ENCODE measurements at regions of chr17 and their contacts with region 1.

Region 1: GRCh38 chr17:67376737-67377487 is at the start of gene PITPNC1:
- DNase-seq: peak; percentile 86 to 94
- ATAC-seq: peak; percentile 72 to 88 (median 83)
- H3K4me3 ChIP-seq: peak within 1 kb of the TSS; percentile 73
- H3K4me3 Mint-ChIP-seq: peak within 1 kb of the TSS; percentile 96
- H3K27ac ChIP-seq: peak within 1 kb of the TSS; percentile 89
- H3K27ac Mint-ChIP-seq: peak within 1 kb of the TSS; percentile 91 to 92
- H3K4me1 ChIP-seq: peaks cover 37% of the 10 kb centered on the region
- H3K4me1 Mint-ChIP-seq: peaks cover 33 to 35% of the 10 kb centered on the region in 2 donors
- H3K27me3 ChIP-seq: no peaks in the 10 kb centered on the region
- H3K27me3 Mint-ChIP-seq: no peaks in the 10 kb centered on the region
- CTCF ChIP-seq: peak; percentile 13
- total RNA-seq, gene PITPNC1: 150 to 185 (median 169) TPM

Region 2: DNA sequence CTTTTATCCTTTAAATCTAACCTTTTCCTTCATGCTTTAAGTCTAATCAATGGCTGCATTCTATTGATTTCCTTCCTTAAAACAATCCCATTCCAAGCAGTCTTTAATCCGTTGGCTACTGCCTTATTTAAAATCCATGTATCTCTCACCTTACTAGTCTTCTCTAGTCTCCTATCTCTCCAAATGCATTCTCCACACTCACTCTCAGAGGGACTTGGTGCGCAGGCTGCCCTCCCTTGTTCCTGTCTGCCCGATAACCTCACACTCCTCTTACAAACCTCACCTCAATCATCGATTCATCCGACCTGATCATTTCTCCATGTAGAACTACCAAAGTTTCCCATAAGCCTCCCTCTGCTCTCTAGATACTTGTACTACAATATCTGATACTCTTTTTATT is 33.7 kb before region 1 on chr17:
- intact Hi-C with region 1: no loop called
- DNase-seq: no peak
- ATAC-seq: no peak
- H3K4me3 ChIP-seq: no peak overlapping the region
- H3K4me3 Mint-ChIP-seq: no peak overlapping the region
- H3K27ac ChIP-seq: no peak overlapping the region
- H3K27ac Mint-ChIP-seq: peak overlapping the region in 1 of 2 donors; percentile 0
- H3K4me1 ChIP-seq: no peaks in the 10 kb centered on the region
- H3K4me1 Mint-ChIP-seq: no peaks in the 10 kb centered on the region
- H3K27me3 ChIP-seq: no peaks in the 10 kb centered on the region
- H3K27me3 Mint-ChIP-seq: no peaks in the 10 kb centered on the region
- CTCF ChIP-seq: no peak

Region 3: DNA sequence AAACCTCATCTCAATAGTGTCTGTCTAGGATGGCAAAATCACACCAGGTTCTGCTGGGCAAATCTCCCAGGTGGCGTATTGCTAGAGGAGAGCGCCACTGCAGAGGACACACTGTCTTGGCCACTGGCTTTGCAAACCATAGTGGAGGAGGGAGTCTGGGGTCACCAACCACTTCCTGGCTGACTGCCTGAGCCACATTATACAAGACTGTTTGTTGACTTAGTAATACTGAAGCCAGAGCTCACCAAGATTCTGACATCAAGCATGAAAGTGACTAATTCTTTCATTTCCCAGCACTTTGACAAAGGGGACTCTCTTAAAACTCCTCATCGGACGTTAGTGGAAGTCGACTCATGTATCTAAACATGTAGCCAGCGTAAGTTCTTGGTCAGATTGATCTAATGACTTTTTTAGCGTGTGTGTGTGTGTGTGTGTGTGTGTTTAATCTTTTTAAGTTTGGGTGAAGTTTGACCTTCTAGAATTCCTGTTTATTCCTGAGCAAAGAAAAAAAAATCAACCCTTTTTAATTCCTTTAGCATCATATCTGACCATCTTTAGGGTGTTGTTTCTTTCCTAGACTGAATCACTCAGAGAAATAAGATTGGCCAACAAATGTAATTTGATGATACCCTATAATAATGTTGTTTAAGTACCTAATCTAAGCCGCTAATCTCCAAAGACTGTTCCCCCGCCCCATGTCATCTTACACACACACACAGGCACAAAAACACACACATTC is 13.9 kb after region 1 on chr17:
- intact Hi-C with region 1: loop called (anchors 2 kb)
- DNase-seq: peak; percentile 75
- ATAC-seq: peak; percentile 77 to 92 (median 88)
- H3K4me3 ChIP-seq: peak overlapping the region; percentile 30
- H3K4me3 Mint-ChIP-seq: peak overlapping the region; percentile 89
- H3K27ac ChIP-seq: peak overlapping the region; percentile 91
- H3K27ac Mint-ChIP-seq: peak overlapping the region; percentile 96 to 99
- H3K4me1 ChIP-seq: peaks cover 82% of the 10 kb centered on the region
- H3K4me1 Mint-ChIP-seq: peaks cover 84 to 87% of the 10 kb centered on the region in 2 donors
- H3K27me3 ChIP-seq: no peaks in the 10 kb centered on the region
- H3K27me3 Mint-ChIP-seq: no peaks in the 10 kb centered on the region
- CTCF ChIP-seq: no peak

Region 4: DNA sequence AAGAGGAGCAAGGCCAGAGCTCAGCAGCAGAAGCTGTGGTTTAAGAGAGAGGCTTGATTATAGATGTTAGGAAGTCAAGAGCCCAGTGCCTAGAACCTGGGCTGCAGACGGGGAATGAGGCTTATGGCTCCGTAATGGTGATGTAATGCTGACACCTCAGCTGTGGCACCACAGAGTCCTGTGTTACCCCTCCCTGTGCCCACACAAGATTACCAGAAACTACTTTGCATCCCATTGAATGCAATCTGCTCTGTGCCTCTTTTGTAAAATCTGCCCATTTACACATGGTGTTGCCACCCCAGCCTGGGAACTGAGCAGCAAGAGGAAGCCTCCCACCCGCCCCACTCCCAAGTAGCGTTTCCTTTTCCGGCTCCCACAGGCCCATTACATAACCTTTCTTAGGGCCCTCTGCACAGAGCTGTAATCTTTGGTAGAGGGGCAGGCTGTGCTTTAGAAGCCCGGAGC is 57.2 kb after region 1 on chr17:
- intact Hi-C with region 1: loop called (anchors 2 kb)
- DNase-seq: peak; percentile 57 to 89
- ATAC-seq: peak; percentile 68 to 74 (median 69)
- H3K4me3 ChIP-seq: no peak overlapping the region
- H3K4me3 Mint-ChIP-seq: peak overlapping the region; percentile 70
- H3K27ac ChIP-seq: peak overlapping the region; percentile 98
- H3K27ac Mint-ChIP-seq: peak overlapping the region; percentile 90 to 95
- H3K4me1 ChIP-seq: peaks cover 58% of the 10 kb centered on the region
- H3K4me1 Mint-ChIP-seq: peaks cover 66 to 75% of the 10 kb centered on the region in 2 donors
- H3K27me3 ChIP-seq: no peaks in the 10 kb centered on the region
- H3K27me3 Mint-ChIP-seq: no peaks in the 10 kb centered on the region
- CTCF ChIP-seq: no peak

Region 5: GRCh38 chr17:67475236-67475937 is 98.5 kb after region 1 on chr17:
- intact Hi-C with region 1: loop called (anchors 1 kb)
- DNase-seq: peak; percentile 79 to 95
- ATAC-seq: peak; percentile 78 to 95 (median 85)
- H3K4me3 ChIP-seq: no peak overlapping the region
- H3K4me3 Mint-ChIP-seq: peak overlapping the region; percentile 65
- H3K27ac ChIP-seq: peak overlapping the region; percentile 83
- H3K27ac Mint-ChIP-seq: peak overlapping the region; percentile 89 to 94
- H3K4me1 ChIP-seq: peaks cover 66% of the 10 kb centered on the region
- H3K4me1 Mint-ChIP-seq: peaks cover 61 to 62% of the 10 kb centered on the region in 2 donors
- H3K27me3 ChIP-seq: no peaks in the 10 kb centered on the region
- H3K27me3 Mint-ChIP-seq: no peaks in the 10 kb centered on the region
- CTCF ChIP-seq: peak; percentile 91

Region 6: GRCh38 chr17:67629971-67630320 is 253.0 kb after region 1 on chr17:
- intact Hi-C with region 1: loop called (anchors 1 kb)
- DNase-seq: peak in 1 of 2 donors; percentile 50
- ATAC-seq: peak in 2 of 3 donors; percentile 63 to 67
- H3K4me3 ChIP-seq: no peak overlapping the region
- H3K4me3 Mint-ChIP-seq: no peak overlapping the region
- H3K27ac ChIP-seq: no peak overlapping the region
- H3K27ac Mint-ChIP-seq: peak overlapping the region; percentile 41 to 84
- H3K4me1 ChIP-seq: no peaks in the 10 kb centered on the region
- H3K4me1 Mint-ChIP-seq: peaks cover 20 to 28% of the 10 kb centered on the region in 2 donors
- H3K27me3 ChIP-seq: no peaks in the 10 kb centered on the region
- H3K27me3 Mint-ChIP-seq: no peaks in the 10 kb centered on the region
- CTCF ChIP-seq: peak; percentile 31

Measured in natural killer cell (primary cell).